ENCODE measurements at regions of chr12 and their contacts with region 1.

Region 1: DNA sequence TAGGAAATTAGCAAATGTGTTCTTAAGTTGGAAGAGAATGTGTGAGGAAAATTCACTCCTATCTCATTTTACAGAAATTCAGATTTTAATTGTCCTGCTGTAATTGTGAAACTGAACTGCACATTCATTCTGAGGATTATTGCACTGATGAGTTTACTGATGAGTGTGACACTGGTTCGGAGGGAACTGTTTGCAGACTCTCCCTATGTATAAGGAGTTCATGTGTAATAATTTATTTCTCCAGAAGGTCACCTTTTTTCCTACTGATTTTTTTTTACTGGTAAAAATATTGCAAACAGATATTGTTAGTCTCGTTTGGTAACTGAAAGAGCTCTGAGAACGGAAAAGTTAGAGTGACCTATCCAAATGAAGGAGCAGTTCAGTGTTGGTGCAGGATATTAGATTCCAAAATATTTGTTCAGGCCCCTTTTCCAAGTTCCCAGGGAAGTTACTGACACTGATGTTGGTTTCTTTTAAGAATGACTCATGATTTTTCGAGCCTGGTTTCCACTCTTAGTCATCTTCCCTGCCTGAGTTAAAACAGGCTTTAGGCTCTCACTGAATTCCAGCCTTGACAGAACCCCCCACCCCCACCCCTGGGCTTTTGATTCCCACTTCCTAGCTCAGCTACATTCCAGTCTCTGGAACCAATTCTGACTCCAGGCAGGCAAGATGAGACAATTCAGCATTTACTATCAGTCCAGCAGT is 18.4 kb downstream of the ANO6 start:
- DNase-seq: peak; percentile 96
- H3K4me3 Mint-ChIP-seq: peak overlapping the region; percentile 5
- H3K27ac Mint-ChIP-seq: peak overlapping the region; percentile 77
- H3K4me1 Mint-ChIP-seq: peaks cover 36% of the 10 kb centered on the region
- H3K27me3 Mint-ChIP-seq: no peaks in the 10 kb centered on the region
- CTCF ChIP-seq: no peak

Region 2: DNA sequence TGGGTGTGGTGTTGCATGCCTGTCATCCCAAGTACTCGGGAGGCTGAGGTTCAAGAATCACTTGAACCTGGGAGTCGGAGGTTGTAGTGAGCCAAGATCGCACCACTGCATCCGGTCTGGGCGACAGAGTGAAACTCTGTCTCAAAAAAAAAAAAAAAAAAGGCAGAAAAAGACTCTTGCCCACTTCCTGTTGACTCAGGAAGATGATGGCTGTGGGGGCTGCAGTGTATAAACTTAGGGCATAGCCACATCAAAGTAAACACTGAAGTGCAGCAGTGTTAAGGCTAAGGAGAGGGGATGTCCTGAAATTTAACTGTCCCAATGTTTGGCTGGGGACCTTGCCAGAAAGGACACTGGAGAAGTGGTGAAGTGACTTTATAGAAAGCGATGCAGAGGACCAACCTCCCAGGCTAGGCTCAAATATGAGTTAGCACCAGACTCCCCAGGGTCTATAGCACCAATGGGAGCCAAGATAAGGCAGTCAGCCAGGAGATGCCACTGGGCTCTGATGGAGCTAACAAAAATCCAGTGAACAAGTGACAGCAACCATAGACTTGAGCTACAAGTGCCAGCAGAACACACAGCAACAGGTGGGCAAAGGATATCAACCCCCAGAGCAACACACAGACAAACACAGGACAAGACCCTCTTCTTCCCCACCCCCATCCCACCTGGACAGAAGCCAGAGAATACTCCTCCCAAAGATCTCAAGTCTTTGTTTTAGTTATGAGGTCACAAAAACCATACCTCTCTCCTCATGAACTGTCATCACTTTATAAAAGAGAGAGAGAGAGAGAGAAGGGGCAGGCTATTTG is 386.2 kb before region 1 on chr12:
- CTCF ChIA-PET with region 1: no interaction called
- POLR2A ChIA-PET with region 1: no interaction called
- intact Hi-C with region 1: no loop called
- DNase-seq: no peak
- H3K4me3 Mint-ChIP-seq: no peak overlapping the region
- H3K27ac Mint-ChIP-seq: no peak overlapping the region
- H3K4me1 Mint-ChIP-seq: no peaks in the 10 kb centered on the region
- H3K27me3 Mint-ChIP-seq: peaks cover 80% of the 10 kb centered on the region
- CTCF ChIP-seq: no peak

Region 3: GRCh38 chr12:45260104-45260815 is 26.0 kb after region 1 on chr12:
- CTCF ChIA-PET with region 1: no interaction called
- POLR2A ChIA-PET with region 1: interaction called, 14 read pairs
- intact Hi-C with region 1: no loop called
- DNase-seq: peak; percentile 27
- H3K4me3 Mint-ChIP-seq: no peak overlapping the region
- H3K27ac Mint-ChIP-seq: no peak overlapping the region
- H3K4me1 Mint-ChIP-seq: peaks cover 26% of the 10 kb centered on the region
- H3K27me3 Mint-ChIP-seq: no peaks in the 10 kb centered on the region
- CTCF ChIP-seq: no peak

Region 4: DNA sequence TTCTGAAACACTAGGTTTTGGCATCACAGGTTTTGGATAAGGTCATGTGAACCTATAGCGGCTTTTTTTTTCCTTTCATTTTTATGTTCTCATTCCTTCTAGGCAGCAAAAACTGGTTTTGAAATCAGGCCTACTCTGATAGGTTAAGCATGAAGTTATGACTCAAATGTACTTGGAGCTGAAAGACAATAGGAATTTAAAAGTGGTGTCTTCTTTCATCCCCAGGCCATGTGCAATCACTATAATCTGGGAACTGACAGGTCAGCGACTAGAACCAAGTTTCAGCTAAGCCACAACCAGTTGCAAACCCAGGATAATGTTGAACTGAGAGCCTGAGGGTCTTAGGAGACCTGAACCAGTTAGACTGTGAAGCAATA is 55.9 kb after region 1 on chr12:
- CTCF ChIA-PET with region 1: no interaction called
- POLR2A ChIA-PET with region 1: interaction called, 13 read pairs
- intact Hi-C with region 1: no loop called
- DNase-seq: peak; percentile 94
- H3K4me3 Mint-ChIP-seq: peak overlapping the region; percentile 18
- H3K27ac Mint-ChIP-seq: peak overlapping the region; percentile 54
- H3K4me1 Mint-ChIP-seq: peaks cover 18% of the 10 kb centered on the region
- H3K27me3 Mint-ChIP-seq: no peaks in the 10 kb centered on the region
- CTCF ChIP-seq: no peak

Region 5: DNA sequence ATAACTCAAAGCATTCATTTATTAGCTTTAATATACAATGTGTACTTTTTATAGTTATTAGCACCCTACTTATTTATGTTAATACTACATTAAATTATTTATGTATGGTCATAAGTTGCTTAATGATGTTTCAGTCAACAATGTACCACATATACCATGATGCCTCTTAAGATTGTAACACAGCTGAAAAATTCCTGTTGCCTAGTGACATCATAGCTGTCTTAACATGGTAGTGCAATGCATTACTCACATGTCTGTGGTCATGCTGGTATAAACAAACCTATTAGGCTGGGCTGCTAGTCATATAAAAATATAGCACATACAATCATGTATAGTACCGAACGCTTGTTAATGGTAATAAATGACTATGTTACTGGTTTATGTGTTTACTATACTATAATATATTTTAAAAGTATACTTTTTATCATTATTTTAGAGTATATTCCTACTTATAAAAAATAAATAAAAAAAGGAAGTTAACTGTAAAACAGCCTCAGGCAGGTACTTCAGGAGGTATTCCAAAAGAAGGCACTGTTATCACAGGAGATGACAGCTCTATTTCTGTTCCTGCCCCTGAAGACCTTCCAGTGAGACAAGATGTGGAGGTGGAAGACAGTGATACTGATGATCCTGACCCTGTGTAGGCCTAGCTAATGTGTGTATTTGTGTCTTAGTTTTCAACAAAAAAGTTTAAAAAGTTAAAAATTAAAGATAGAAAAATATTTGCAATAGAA is 102.2 kb after region 1 on chr12:
- CTCF ChIA-PET with region 1: no interaction called
- POLR2A ChIA-PET with region 1: interaction called, 13 read pairs
- intact Hi-C with region 1: no loop called
- DNase-seq: peak; percentile 77
- H3K4me3 Mint-ChIP-seq: no peak overlapping the region
- H3K27ac Mint-ChIP-seq: no peak overlapping the region
- H3K4me1 Mint-ChIP-seq: peaks cover 18% of the 10 kb centered on the region
- H3K27me3 Mint-ChIP-seq: no peaks in the 10 kb centered on the region
- CTCF ChIP-seq: no peak

Measured in MCF 10A (cell line).